GM13976 (cell line): ENCODE measurements at regions of chr6 and their contacts with region 1.

Region 1: DNA sequence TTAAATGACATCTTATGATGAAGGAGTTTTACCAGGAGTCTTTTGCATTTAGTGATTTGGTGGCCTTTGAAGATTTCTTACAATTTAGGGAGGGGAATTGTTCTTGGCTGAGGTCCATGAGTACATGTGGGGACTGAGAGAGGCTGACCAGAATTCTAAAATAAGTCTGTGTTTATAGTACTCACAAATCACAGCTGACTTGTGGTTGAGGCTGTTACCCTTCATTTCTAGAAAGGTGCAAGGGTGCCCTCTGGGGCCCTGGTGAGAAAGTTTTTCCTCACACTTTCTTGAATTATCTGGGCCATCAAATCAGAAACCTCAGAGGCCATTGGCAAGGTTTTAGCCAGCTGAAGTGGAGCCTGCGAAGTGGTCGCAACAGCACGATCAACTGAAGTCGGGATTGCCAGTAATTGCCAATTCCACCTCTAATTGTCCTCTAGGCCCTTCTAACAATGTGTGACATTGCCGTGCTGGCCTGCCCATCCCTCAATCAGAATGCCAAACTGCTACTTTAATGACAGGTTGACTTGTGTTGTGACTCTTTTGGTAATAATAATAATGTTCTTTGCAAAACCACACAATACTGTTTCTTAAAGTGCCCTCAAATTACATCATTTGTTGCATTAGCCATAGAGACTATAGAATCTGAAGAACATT is 221.6 kb downstream of the OGFRL1 start:
- DNase-seq: peak; percentile 12
- CTCF ChIP-seq: peak; percentile 39

Region 2: DNA sequence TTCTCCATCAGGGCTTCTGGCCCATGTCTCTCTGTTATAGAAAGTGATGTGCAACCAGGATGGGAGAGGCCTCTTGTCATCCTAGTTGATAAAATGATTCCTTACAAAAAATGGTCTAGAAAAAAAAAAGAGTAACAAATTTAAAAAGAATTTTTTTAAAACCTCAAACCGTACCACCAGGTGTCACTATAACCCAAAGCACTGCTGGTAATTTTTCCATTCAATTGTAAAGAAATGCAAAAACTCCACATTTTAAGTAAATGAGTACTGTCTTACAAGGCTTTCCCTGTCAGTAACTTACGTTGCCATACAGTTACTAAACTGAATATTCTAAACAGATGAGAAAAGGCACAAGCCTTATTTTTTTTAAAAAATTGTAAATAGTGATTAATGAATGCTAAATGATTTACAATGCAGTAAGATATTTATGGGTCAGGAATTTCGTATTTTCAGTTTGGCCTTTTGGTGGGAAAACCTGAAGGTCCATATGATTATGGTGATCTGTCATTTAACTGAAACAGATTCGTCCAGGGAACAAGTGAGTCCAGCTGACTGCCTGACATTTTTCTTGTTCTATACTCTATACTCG is 126.2 kb before region 1 on chr6:
- in situ Hi-C with region 1: loop called (anchors 10 kb)
- DNase-seq: peak; percentile 10
- CTCF ChIP-seq: peak; percentile 29

Region 3: GRCh38 chr6:71913444-71914234 is 403.5 kb after region 1 on chr6:
- in situ Hi-C with region 1: no loop called
- DNase-seq: no peak
- CTCF ChIP-seq: no peak